ENCODE measurements at regions of chr15 and their contacts with region 1.

Region 1: DNA sequence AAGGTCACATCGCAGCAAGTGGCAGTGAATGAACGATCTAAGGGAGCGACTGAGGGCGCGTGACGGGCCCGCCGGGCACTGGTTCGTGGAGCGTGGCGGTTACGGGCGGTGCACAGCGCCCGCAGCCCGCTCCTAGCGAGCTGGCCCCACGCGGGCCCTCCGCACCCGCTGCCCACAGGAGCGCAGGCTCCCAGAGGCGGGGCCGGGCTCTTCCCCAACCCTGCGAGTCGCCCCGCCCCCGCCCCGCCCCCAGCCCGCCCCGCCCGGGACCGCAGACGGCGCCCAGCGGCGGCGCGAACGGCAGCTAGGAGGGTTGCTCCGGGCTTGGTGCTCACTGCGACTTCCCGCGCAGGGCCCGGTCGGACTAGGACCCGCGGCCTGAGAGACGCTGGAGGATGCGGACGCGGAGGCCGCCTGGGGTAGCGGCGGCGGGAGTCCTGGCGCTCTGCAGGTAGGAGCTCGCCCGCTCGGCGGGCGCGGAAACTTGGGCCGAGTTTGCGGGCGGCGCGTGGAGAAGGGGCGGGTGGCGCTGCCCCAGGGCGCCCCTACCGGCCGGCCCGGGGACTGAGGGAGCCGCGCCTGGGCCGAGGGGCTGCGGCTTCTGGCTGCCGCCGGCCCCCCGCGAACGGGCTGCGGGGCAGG is at the start of gene C15orf39:
- DNase-seq: peak; percentile 92
- CTCF ChIP-seq: peak; percentile 88

Region 2: DNA sequence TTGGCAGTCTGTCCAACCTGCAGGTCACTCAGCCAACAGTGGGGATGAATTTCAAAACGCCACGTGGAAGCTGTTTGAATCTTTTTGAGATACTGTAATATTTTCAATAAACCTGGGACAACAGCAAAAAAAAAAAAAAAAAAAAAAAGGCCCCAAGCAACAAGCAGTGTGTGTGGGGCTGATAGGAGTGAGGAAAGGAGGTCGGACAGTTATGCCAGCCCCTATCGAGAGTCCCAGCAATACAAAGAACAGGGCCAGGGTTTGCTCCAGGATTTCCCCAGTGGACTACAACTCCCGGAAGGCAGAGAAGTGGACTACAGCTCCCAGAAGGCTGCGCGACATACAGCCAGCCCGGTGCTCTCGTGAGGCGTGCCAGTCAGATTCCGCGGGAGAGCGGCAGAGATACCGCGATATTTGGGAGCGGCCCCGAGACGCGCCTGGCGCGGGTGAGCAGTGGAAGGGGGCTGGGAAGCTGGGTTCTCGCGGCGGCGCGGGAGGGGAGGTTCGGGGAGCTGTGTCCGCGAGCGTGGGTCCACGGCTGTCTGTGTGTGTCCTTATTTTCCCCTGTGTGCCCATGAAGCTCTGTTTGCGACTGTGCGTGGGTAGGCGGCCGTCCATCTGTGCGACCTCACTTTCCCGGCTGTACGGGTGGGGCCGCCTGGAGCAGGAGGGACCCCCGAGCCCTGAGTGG is 178.4 kb before region 1 on chr15 and contains the start of gene PPCDC:
- CTCF ChIA-PET with region 1: interaction called, 167 read pairs
- POLR2A ChIA-PET with region 1: no interaction called
- DNase-seq: peak; percentile 98
- CTCF ChIP-seq: no peak

Region 3: GRCh38 chr15:75036314-75036649 is 165.4 kb before region 1 on chr15:
- CTCF ChIA-PET with region 1: interaction called, 167 read pairs
- POLR2A ChIA-PET with region 1: interaction called, 4 read pairs
- DNase-seq: no peak
- CTCF ChIP-seq: no peak

Region 4: DNA sequence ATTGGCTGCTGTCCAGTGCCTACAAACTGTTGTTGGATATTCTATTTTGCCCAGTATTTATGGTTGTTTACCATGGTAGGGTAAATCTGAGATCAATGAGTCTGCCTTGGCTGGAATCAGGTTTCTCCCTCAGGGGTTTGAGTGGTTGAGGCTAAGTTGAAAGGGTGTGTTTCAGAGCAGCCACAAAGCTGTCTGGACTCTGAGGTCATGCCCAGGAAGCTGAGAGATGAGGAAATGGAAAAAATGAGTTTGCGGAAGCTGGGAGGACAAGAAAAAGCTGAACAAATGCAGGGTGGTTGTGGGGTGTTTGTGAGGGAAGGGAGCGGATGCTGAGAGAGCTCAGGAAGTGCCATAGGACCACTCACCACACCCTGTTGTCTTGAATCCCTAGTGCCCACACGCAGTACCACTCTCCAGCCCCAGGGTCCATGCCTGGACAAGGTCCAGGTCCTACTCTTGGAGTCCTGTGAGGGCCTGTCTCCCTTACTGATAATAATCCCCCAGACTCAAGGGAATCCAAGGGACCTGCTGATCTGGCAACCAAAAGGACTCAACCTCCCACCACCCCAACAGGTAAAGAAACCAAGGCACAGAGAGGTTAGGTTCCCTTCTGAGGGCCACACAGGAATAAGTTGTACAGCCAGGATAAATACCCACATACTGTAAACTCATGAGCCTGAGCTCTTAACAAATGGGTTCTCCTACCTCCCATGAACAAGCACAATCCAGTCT is 96.8 kb before region 1 on chr15:
- CTCF ChIA-PET with region 1: interaction called, 11 read pairs
- POLR2A ChIA-PET with region 1: interaction called, 4 read pairs
- DNase-seq: peak; percentile 83
- CTCF ChIP-seq: no peak

Region 5: DNA sequence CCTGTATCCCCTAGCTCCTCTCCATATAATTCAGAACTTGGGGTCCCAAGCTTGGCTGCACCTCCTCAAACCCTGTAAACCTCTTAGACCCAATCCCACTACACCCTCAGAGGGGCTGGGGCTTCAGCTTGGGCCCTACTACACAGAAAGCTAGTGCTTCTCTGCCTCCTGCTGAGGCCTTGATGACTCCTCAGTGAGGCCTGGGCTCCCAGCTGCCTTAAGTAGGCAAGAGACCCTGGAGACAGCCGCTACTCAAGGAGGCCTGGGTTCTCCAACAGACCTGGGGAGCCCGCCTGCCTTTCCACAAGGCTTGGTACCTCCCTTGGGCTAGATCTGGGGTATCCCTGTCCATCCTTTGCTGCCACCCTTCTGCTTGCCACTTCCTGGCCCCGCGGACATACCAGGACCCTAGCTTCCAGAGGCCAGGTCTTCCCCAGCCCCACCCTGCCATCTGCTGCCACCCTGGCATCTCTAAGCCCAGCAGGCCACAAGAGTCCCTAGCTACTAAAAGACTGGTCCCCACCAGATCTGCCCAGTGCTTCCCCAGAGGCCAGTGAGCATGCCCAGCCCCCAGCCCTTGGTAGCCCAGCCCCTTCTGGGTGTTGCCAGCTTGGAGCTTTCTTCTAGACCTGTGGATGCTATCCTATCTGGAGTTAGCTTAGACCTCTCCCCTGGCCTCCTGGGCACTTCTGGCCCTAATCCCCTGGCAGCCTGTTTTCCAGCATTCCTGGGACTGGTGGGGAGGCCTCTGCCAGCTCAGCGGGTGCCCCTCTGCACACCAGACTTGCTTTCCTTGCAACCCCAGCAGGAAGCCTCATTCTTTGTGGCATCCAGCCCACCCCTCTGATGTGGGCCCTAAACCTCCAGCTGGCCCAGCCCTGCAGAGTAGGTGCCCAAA is 13.6 kb after region 1 on chr15:
- CTCF ChIA-PET with region 1: interaction called, 19 read pairs
- POLR2A ChIA-PET with region 1: no interaction called
- DNase-seq: no peak
- CTCF ChIP-seq: no peak

Measured in GM10248 (cell line).